Tibial artery (tissue), 4 donors: ENCODE measurements at regions of chr11 and their contacts with region 1.

Region 1: DNA sequence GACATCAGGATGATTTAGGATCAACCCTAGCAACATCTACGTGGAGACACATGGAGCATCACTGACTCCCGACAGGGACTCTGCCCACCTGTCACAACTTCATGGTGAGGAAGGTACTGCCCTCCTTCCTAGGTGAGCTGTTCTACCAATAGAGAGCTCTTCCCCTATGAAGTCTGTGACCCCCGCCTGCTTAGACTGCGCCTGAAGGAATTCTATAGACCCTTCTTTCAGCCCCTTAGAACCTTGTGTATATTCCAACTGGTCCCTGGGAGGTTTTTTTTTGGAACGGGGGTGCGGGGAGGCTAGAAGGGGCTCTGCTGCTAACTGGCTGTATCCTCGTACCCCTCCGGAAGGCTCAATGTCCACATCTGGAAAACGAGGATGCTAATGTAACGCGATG is 566 bp downstream of the INTS4 start:
- DNase-seq: no peak
- H3K4me3 ChIP-seq: peak overlapping the region; percentile 54 to 74
- H3K27ac ChIP-seq: peak overlapping the region; percentile 63 to 76
- H3K4me1 ChIP-seq: peaks cover 0 to 23% (median 16%) of the 10 kb centered on the region in 4 donors
- H3K27me3 ChIP-seq: no peaks in the 10 kb centered on the region
- CTCF ChIP-seq: no peak

Region 2: DNA sequence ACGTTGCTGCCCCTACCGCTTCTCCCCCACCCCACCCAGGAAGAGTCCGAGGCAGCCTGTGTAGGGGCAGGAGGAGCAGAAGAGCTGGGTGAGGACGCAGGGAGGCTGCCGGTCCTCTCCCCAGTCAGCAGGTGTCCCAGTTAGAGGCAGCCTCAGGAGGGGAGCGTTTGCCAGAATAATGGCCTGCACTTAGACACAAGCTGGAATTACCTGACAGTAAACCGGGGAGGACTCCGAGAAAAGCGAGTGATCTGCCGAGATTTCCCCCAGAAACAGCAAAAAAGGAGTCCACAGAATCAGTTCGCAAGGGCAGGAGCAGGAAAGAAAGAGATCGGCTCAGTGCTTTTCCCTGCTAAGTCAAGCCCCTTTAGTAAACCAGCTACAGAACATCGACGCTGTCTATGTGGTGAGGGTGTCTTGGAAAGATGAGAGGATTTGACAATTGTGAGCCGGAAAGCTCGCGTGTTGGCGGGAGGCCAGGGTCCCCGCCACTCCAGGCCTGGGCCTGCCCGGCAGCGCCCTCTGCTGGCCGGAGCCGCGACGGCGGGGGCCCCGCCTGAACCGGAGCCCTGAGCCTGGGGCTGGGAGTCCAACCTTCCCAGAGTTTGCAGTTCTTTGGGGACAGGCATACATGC is 52.1 kb after region 1 on chr11:
- intact Hi-C with region 1: loop called (anchors 2 kb)
- DNase-seq: peak; percentile 74 to 88
- H3K4me3 ChIP-seq: peak overlapping the region; percentile 52 to 57
- H3K27ac ChIP-seq: peak overlapping the region; percentile 58 to 73
- H3K4me1 ChIP-seq: peaks cover 0 to 20% (median 7%) of the 10 kb centered on the region in 4 donors
- H3K27me3 ChIP-seq: no peaks in the 10 kb centered on the region
- CTCF ChIP-seq: peak; percentile 94 to 99

Region 3: DNA sequence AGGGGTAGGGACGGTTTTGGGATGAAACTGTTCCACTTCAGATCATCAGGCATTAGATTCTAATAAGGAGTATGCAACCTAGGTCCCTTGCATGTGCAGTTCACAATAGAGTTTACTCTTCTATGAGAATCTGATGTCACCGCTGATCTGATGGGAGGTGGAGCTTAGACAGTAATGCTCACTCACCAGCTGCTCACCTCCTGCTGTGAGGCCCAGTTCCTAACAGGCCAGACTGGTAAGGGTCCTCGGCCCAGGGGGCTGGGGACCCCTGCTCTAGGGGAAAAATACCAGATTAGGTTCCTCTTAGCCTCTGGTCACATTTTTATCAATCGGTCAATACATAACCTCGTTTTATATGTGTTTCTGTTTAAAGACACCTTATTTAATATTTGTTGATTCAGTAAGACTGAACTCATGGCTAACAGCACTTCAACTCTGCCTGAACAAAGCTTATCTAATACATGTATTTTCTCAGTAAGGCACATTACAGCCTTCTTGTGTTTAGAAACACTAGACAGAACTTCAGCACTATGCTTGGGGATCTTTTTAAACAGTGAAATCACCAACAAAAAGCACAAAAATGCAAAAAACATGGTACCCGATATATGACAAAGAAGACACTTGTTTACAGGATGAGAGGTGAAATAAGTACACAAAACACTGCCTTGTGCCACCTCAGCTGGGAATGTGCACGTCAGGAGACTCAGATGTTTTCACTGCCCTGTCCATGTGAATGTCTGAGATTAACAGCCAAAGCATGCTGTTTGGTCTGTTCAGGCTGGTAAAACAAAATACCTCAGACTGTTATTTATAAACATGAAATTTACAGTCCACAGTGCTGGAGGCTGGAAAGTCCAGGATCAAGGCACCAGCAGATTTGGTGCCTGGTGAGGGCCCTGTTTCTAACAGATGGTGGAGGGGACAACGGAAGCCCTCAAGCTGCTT is 302.4 kb after region 1 on chr11:
- intact Hi-C with region 1: no loop called
- DNase-seq: no peak
- H3K4me3 ChIP-seq: no peak overlapping the region
- H3K27ac ChIP-seq: no peak overlapping the region
- H3K4me1 ChIP-seq: peaks cover 0 to 40% (median 2%) of the 10 kb centered on the region in 4 donors
- H3K27me3 ChIP-seq: no peaks in the 10 kb centered on the region
- CTCF ChIP-seq: no peak